ENCODE measurements at regions of chr12 and their contacts with region 1.

Region 1: GRCh38 chr12:47223848-47224213 is 144.1 kb upstream of the AMIGO2 start:
- DNase-seq: no peak
- ATAC-seq: no peak
- H3K4me3 ChIP-seq: peak overlapping the region; percentile 16 to 31
- H3K4me3 Mint-ChIP-seq: peak overlapping the region; percentile 83
- H3K27ac ChIP-seq: peak overlapping the region in 1 of 2 experiments; percentile 64
- H3K27ac Mint-ChIP-seq: peak overlapping the region; percentile 97
- H3K4me1 ChIP-seq: peaks cover 58% of the 10 kb centered on the region
- H3K4me1 Mint-ChIP-seq: peaks cover 83% of the 10 kb centered on the region
- H3K27me3 ChIP-seq: no peaks in the 10 kb centered on the region
- H3K27me3 Mint-ChIP-seq: no peaks in the 10 kb centered on the region
- CTCF ChIP-seq: no peak

Region 2: GRCh38 chr12:47236109-47236714 is 12.4 kb after region 1 on chr12:
- CTCF ChIA-PET with region 1: interaction called, 5 read pairs
- POLR2A ChIA-PET with region 1: interaction called, 6 read pairs
- intact Hi-C with region 1: loop called in 1 of 2 experiments (anchors 1 kb)
- DNase-seq: no peak
- ATAC-seq: no peak
- H3K4me3 ChIP-seq: no peak overlapping the region
- H3K4me3 Mint-ChIP-seq: no peak overlapping the region
- H3K27ac ChIP-seq: no peak overlapping the region
- H3K27ac Mint-ChIP-seq: peak overlapping the region; percentile 73
- H3K4me1 ChIP-seq: peaks cover 44% of the 10 kb centered on the region
- H3K4me1 Mint-ChIP-seq: peaks cover 61% of the 10 kb centered on the region
- H3K27me3 ChIP-seq: no peaks in the 10 kb centered on the region
- H3K27me3 Mint-ChIP-seq: no peaks in the 10 kb centered on the region
- CTCF ChIP-seq: no peak

Region 3: DNA sequence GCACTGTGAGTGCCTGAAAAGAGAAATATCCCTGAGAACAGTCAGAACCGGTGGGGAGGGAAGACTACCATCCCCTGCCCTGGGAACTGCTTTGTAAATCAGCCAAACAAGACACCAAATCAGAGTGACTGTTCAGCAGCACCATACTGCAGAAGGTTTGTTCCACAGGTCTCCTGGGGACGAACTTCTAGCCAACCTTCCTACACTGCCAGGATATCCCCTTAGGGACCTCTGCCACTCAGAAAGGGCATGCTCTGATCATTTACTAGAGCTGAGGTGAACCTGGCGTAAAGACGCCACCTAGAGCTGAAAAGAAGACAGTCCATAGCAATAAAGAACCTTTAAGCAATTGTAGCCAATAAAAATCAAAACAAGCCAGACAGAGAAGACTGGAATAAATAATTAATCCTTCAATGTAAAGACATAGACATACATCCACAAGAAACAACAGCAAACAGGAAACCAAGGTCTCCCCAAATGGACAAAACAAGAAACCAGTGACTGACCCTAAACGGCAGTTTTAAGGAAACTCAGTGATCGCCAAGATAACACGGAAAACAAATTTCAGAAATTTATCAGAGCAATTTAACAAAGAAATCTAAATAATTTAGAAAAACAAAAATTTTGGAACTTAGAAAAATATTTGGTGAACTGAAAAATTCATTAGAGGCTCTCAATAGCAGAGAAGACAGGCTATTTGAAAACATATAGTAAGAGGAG is 84.0 kb after region 1 on chr12:
- CTCF ChIA-PET with region 1: interaction called, 3 read pairs
- POLR2A ChIA-PET with region 1: interaction called, 19 read pairs
- intact Hi-C with region 1: loop called in 1 of 2 experiments (anchors 5 kb)
- DNase-seq: peak; percentile 21 to 81 (median 56)
- ATAC-seq: peak; percentile 91
- H3K4me3 ChIP-seq: peak overlapping the region; percentile 37 to 46
- H3K4me3 Mint-ChIP-seq: peak overlapping the region; percentile 81
- H3K27ac ChIP-seq: peak overlapping the region; percentile 21 to 25
- H3K27ac Mint-ChIP-seq: peak overlapping the region; percentile 88
- H3K4me1 ChIP-seq: peaks cover 12% of the 10 kb centered on the region
- H3K4me1 Mint-ChIP-seq: peaks cover 47% of the 10 kb centered on the region
- H3K27me3 ChIP-seq: no peaks in the 10 kb centered on the region
- H3K27me3 Mint-ChIP-seq: no peaks in the 10 kb centered on the region
- CTCF ChIP-seq: peak; percentile 60